Activated T-helper 2 cell treated with anti-CD3 and anti-CD28 coated beads, Interferon-gamma antibody, Interleukin-2, Interleukin-4, amounts not matched to agents 10 μg/mL and 5 μg/mL and 100 μg/mL, durations not matched to agents 14 hours and 24 hours and 36 hours (primary cell): ENCODE measurements at regions of chr19 and their contacts with region 1.

Region 1: GRCh38 chr19:8307965-8308866 is at the start of gene CD320:
- DNase-seq: peak; percentile 85
- H3K4me3 Mint-ChIP-seq: peak within 1 kb of the TSS; percentile 88
- H3K27ac Mint-ChIP-seq: peak within 1 kb of the TSS; percentile 88
- H3K4me1 Mint-ChIP-seq: peaks cover 19% of the 10 kb centered on the region
- H3K27me3 Mint-ChIP-seq: no peaks in the 10 kb centered on the region
- total RNA-seq, gene CD320: 90.0 and 90.2 TPM in 2 replicates

Region 2: DNA sequence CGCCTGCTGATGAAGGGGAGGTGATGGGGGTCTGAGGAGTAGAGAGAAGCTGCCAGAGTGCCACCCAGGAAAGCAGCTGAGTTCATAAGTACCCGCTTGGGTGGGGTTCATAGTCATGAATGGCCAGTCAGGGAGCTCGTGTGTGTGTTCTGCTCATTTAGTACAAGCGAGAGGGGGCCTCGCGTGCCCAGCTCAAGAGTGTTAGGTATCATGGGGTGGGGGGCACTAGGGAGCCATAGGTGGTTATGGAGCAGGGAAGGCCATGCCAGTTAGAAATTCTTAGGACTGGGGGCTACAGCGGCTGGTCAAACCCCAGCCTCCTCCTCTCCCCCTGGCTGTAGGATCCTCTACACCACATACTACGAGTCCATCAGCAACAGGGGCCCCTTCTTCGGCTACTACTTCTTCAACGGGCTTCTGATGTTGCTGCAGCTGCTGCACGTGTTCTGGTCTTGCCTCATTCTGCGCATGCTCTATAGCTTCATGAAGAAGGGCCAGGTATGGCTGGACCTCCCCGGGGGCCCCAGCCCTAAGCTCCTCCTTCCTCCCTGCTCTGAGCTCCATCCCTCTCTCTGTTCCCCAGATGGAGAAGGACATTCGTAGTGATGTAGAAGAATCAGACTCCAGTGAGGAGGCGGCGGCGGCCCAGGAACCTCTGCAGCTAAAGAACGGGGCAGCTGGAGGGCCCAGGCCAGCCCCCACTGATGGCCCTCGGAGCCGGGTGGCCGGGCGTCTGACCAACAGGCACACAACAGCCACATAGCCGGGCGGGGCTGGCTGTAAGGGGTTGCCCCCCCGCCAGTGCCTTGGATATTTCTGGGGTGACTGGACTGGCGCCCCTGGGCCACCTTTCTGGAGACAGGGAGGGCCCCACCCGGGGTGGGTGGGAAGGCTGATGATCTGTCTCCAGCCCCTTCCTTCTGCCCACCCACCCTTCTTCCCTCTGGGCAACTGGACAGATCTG is 46.6 kb before region 1 on chr19:
- intact Hi-C with region 1: no loop called
- DNase-seq: no peak
- H3K4me3 Mint-ChIP-seq: no peak overlapping the region
- H3K27ac Mint-ChIP-seq: no peak overlapping the region
- H3K4me1 Mint-ChIP-seq: peaks cover 4% of the 10 kb centered on the region
- H3K27me3 Mint-ChIP-seq: no peaks in the 10 kb centered on the region

Region 3: GRCh38 chr19:8321060-8321985 is 13.1 kb after region 1 on chr19 and contains the starts of genes NDUFA7 and RPS28:
- intact Hi-C with region 1: loop called (anchors 1 kb)
- DNase-seq: peak; percentile 96
- H3K4me3 Mint-ChIP-seq: peak within 1 kb of the TSS; percentile 99
- H3K27ac Mint-ChIP-seq: peak within 1 kb of the TSS; percentile 98
- H3K4me1 Mint-ChIP-seq: peaks cover 12% of the 10 kb centered on the region
- H3K27me3 Mint-ChIP-seq: no peaks in the 10 kb centered on the region
- total RNA-seq, gene NDUFA7: 48.6 and 54.5 TPM in 2 replicates
- total RNA-seq, gene RPS28: 1,945 and 1,967 TPM in 2 replicates